ENCODE measurements at regions of chr7 and their contacts with region 1.

Region 1: DNA sequence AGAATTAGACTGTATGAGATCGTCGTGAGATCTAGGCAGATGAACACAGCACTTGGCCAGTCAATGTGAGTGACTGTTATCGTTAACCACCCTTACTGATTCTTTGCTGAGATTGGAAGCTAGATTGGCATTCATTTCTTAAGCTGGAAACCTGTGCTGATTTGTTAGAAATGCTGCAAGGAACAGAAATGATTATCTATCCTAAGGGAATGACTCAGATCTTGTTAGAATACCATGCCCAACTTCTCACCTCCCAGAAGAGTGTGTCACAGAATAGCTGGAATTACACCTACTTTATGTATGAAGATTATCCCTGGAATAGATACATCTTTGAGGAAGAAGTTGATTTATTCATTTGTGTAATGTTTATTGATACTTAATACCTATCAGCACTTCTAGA is 275.2 kb downstream of the AUTS2 start:
- DNase-seq: no peak
- H3K4me3 ChIP-seq: no peak overlapping the region
- H3K27ac ChIP-seq: no peak overlapping the region
- H3K4me1 ChIP-seq: peaks cover 0 to 6% (median 0%) of the 10 kb centered on the region in 4 donors
- H3K27me3 ChIP-seq: no peaks in the 10 kb centered on the region
- CTCF ChIP-seq: no peak
- EP300 ChIP-seq: no peak
- POLR2A ChIP-seq: no peak

Region 2: DNA sequence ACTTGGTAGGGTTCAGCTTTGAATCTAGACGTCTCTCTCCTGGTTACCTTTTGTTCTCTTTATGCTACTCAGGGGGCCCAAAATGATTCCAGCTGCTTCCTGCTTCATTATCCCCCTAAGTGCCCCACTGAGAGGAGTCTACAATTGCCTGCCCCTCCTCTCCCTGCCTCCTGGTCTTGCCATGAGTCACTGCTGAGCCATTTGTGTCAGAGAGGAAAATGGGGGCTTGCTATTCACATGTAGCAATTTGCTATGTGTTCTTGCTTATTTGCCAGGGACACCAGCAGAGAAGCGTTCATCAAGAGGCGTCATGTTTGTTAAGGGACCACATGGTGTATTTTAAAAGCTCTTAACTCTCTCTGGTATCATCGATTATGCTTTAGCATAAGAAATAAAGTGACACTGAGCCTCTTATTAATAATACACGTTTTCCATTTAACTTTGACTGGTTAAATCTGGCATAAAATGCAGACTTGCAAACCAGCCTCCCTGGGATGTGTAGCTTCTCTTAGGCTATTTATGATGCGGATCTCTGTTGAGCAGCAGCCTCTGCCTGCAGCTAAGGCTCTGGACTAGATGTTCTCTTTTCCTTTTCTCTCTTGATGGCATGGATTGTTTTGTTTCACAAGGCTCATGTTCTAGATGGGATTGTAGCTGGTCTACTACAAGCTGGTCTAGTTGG is 36.0 kb before region 1 on chr7:
- in situ Hi-C with region 1: no loop called
- intact Hi-C with region 1: loop called (anchors 1 kb)
- DNase-seq: no peak
- H3K4me3 ChIP-seq: no peak overlapping the region
- H3K27ac ChIP-seq: no peak overlapping the region
- H3K4me1 ChIP-seq: no peaks in the 10 kb centered on the region
- H3K27me3 ChIP-seq: no peaks in the 10 kb centered on the region
- CTCF ChIP-seq: no peak
- EP300 ChIP-seq: no peak
- POLR2A ChIP-seq: no peak

Measured in transverse colon (tissue), 4 donors.